ENCODE measurements at regions of chr12 and their contacts with region 1.

Region 1: DNA sequence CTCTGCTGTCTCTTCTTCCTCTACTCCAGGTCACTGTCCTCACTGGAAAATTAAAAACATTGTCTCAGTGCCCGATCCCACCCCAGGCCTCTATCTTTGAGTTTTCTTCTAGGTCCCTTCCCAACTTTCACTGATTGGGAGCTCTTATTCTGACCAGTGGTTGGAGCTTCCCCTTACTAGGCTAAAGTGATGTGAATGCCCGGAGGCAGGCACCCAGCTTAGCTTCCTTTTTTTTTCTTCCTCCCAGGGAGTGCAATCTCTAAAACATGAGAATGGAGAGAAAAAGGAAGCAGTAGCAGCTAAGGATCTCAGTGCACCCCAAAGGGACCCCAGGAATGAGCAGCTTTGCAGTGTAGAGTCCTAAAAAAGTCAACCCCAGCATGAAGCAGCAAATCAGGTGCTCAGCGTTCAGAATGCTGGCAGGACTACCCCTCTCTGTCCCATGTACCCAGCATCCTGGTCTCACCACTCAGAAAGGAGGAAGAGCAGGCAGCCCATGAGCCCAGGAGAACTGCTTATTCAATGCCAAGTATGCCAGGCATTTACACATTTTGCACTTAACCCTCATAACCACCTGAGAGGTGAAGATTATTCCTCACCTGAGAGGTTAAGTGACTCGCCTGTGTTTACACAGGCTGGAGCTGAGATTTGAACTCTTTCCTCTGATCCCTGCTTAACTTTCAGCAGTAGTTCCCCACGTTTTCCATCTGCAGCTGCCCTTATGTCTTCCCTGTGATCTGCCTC is 146.2 kb upstream of the PWP1 start:
- DNase-seq: no peak

Region 2: GRCh38 chr12:107558141-107558815 is 18.9 kb after region 1 on chr12:
- intact Hi-C with region 1: loop called in 1 of 2 experiments (anchors 1 kb)
- DNase-seq: no peak

Measured in posterior vena cava (tissue), 2 donors.